Mammary epithelial cell (primary cell): ENCODE measurements at regions of chr7 and their contacts with region 1.

Region 1: GRCh38 chr7:30164567-30164966 is 29.8 kb downstream of the MTURN start:
- DNase-seq: peak; percentile 77
- H3K4me3 ChIP-seq: no peak overlapping the region
- H3K27ac ChIP-seq: peak overlapping the region; percentile 90
- H3K4me1 ChIP-seq: peaks cover 65% of the 10 kb centered on the region
- H3K27me3 ChIP-seq: no peaks in the 10 kb centered on the region
- CTCF ChIP-seq: peak; percentile 62 to 68

Region 2: GRCh38 chr7:29878081-29878688 is 286.4 kb before region 1 on chr7:
- CTCF ChIA-PET with region 1: no interaction called
- dilution Hi-C with region 1: no loop called
- in situ Hi-C with region 1: no loop called
- intact Hi-C with region 1: loop called (anchors 1 kb)
- DNase-seq: peak; percentile 33
- H3K4me3 ChIP-seq: no peak overlapping the region
- H3K27ac ChIP-seq: no peak overlapping the region
- H3K4me1 ChIP-seq: no peaks in the 10 kb centered on the region
- H3K27me3 ChIP-seq: no peaks in the 10 kb centered on the region
- CTCF ChIP-seq: peak; percentile 67 to 80

Region 3: GRCh38 chr7:30074422-30075030 is 90.0 kb before region 1 on chr7:
- CTCF ChIA-PET with region 1: interaction called, 6 read pairs
- dilution Hi-C with region 1: no loop called
- in situ Hi-C with region 1: no loop called
- intact Hi-C with region 1: loop called (anchors 5 kb)
- DNase-seq: peak; percentile 31
- H3K4me3 ChIP-seq: no peak overlapping the region
- H3K27ac ChIP-seq: no peak overlapping the region
- H3K4me1 ChIP-seq: no peaks in the 10 kb centered on the region
- H3K27me3 ChIP-seq: no peaks in the 10 kb centered on the region
- CTCF ChIP-seq: peak; percentile 34 to 58

Region 4: GRCh38 chr7:30225863-30226613 is 61.5 kb after region 1 on chr7:
- CTCF ChIA-PET with region 1: interaction called, 3 read pairs
- dilution Hi-C with region 1: no loop called
- in situ Hi-C with region 1: no loop called
- intact Hi-C with region 1: loop called (anchors 1 kb)
- DNase-seq: peak; percentile 97
- H3K4me3 ChIP-seq: no peak overlapping the region
- H3K27ac ChIP-seq: peak overlapping the region; percentile 83
- H3K4me1 ChIP-seq: peaks cover 37% of the 10 kb centered on the region
- H3K27me3 ChIP-seq: no peaks in the 10 kb centered on the region
- CTCF ChIP-seq: no peak

Region 5: GRCh38 chr7:30284298-30285066 is 119.9 kb after region 1 on chr7 and contains the start of gene ZNRF2:
- CTCF ChIA-PET with region 1: interaction called, 3 read pairs
- dilution Hi-C with region 1: no loop called
- in situ Hi-C with region 1: no loop called
- intact Hi-C with region 1: loop called (anchors 1 kb)
- DNase-seq: peak; percentile 99
- H3K4me3 ChIP-seq: peak within 1 kb of the TSS; percentile 54 to 91 (median 59)
- H3K27ac ChIP-seq: peak within 1 kb of the TSS; percentile 93
- H3K4me1 ChIP-seq: peaks cover 9% of the 10 kb centered on the region
- H3K27me3 ChIP-seq: no peaks in the 10 kb centered on the region
- CTCF ChIP-seq: peak in 1 of 2 donors; percentile 46
- total RNA-seq, gene ZNRF2: 13.1 to 32.3 TPM

Region 6: DNA sequence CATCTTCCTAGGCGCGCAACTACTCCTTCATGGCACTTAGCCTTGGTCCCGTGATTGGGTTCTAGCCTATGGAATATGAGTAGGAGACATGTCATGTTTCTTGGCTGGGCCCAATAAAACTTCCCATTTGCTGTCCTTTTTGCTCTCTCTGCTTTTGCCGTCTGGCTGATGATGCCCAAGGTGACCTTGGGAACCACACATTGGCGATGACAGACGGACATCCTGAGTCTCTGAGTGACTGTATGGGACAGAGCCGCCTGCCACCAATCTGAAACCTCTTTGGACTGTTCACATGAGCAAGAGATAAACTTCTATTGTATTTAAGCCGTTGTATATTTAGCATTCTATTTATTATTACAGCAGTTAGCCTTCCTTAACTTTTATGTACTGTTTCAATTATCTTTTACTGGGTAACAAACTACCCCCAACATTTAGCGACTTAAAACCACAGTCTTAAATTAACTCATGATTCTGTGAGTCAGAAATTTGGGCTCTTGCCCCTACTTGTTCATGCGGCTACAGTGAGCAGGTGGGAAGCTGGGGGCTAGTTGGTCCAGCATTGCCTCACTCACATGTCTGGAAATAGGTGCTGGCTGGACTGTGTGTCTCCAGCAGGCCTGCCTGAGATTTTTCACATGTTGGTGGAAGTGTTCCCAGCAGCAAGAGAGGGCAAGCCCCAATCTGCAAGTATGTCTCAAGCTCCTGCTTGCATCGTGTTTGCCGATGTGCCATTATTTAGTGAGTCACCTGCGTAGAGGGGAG is 242.3 kb after region 1 on chr7:
- CTCF ChIA-PET with region 1: interaction called, 11 read pairs
- dilution Hi-C with region 1: no loop called
- in situ Hi-C with region 1: loop called (anchors 5 kb)
- intact Hi-C with region 1: loop called (anchors 1 kb)
- DNase-seq: peak; percentile 97
- H3K4me3 ChIP-seq: no peak overlapping the region
- H3K27ac ChIP-seq: peak overlapping the region; percentile 81
- H3K4me1 ChIP-seq: peaks cover 40% of the 10 kb centered on the region
- H3K27me3 ChIP-seq: no peaks in the 10 kb centered on the region
- CTCF ChIP-seq: no peak

Region 7: GRCh38 chr7:30564243-30564892 is 399.8 kb after region 1 on chr7:
- CTCF ChIA-PET with region 1: interaction called, 11 read pairs
- dilution Hi-C with region 1: no loop called
- in situ Hi-C with region 1: loop called (anchors 10 kb)
- intact Hi-C with region 1: loop called (anchors 1 kb)
- DNase-seq: peak; percentile 78
- H3K4me3 ChIP-seq: no peak overlapping the region
- H3K27ac ChIP-seq: peak overlapping the region; percentile 77
- H3K4me1 ChIP-seq: peaks cover 24% of the 10 kb centered on the region
- H3K27me3 ChIP-seq: no peaks in the 10 kb centered on the region
- CTCF ChIP-seq: peak; percentile 81 to 91